AG04449 (cell line): ENCODE measurements at regions of chr1 and their contacts with region 1.

Region 1: DNA sequence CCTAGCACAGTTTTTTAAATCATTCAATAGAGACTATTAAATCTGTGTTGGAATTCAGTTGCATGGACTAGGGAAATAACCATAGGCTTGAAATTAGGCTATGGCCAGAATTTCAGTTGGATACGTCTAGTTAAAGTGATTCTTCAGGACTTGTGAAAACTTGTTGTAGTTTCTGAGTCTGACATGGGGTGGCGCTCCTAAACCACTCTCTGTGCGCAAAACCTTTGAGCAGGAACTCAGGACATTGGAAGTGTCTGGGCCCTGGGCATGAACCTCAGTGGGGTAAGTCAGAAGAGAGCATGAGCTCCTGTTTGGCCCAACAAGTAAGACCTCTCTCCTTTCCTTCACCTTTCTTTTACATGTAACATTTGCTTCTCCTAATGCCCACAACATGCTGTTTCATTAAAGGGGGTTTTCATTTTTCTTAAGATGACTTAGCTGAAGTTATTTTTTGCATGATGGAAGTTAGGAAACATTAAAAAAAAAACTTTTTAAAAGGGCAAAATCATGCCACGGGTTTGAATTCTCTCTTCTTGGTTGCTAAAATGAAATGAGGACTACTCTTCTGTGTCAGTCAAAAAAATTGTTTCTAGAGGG is 17.1 kb upstream of the CCDC190 start:
- DNase-seq: no peak
- H3K4me3 ChIP-seq: no peak overlapping the region
- CTCF ChIP-seq: peak; percentile 70

Region 2: DNA sequence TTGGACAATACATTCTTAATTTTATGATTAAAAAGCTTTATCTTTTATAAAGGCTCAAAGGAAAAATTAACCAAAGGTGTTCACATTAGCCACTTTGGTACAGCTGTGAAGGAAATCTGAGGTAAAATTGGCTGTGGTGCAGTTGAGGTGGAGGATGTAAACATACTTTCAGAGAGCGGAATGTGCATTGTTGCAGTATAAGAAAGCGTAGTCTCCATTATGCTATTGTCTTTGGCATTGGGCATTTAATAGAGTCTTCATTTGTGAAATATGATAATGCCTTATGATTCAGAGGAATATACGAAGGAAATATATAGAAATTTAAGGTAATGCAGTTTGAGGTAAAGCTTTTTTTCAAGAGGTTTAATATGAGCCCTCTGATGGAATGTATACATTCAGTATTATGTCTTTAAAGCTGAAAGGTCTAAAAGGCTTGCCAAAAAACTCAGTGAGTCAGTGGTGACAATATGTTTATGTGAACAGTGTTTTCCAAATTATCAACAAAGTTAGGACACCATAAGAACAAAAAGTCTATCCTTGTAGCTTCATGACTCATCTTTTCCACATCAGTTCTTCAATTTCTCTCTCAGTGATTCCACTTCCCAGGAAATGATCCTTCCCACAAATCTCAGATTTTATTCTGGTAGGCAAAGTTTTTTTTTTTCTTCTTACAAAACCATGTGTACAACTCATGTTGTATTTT is 272.7 kb before region 1 on chr1:
- CTCF ChIA-PET with region 1: no interaction called
- POLR2A ChIA-PET with region 1: no interaction called
- DNase-seq: peak; percentile 73
- H3K4me3 ChIP-seq: no peak overlapping the region
- CTCF ChIP-seq: no peak

Region 3: DNA sequence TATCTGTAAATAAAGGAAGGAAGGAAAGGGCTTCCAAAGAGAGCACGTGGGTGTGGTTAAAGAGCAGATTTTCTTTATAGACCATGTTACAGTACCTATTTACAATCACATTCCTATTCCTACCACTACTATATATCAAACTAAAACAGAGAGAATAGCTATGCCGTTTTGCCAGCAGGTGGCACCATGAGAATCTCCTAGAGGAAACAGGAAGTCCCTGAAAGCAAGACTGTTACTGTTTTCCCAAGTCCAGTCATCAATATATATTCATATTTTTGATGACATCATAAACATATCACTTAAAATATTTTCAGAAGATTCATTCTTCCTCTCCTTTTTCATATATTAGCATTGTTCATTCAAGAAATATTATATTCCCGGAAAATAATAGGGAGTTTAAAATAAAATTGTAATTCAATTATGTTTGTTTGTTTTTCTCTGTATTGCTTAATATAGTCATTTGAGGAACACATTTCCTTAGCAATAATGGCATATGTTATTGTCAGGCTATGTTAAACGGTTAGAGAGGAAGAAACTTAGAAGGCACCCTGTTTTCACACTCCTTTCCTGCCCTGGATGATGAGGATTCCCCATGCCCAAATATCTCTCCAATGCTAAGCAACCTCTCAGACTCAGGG is 23.7 kb before region 1 on chr1:
- CTCF ChIA-PET with region 1: interaction called, 47 read pairs
- POLR2A ChIA-PET with region 1: interaction called, 6 read pairs
- DNase-seq: no peak
- H3K4me3 ChIP-seq: no peak overlapping the region
- CTCF ChIP-seq: peak; percentile 63

Region 4: DNA sequence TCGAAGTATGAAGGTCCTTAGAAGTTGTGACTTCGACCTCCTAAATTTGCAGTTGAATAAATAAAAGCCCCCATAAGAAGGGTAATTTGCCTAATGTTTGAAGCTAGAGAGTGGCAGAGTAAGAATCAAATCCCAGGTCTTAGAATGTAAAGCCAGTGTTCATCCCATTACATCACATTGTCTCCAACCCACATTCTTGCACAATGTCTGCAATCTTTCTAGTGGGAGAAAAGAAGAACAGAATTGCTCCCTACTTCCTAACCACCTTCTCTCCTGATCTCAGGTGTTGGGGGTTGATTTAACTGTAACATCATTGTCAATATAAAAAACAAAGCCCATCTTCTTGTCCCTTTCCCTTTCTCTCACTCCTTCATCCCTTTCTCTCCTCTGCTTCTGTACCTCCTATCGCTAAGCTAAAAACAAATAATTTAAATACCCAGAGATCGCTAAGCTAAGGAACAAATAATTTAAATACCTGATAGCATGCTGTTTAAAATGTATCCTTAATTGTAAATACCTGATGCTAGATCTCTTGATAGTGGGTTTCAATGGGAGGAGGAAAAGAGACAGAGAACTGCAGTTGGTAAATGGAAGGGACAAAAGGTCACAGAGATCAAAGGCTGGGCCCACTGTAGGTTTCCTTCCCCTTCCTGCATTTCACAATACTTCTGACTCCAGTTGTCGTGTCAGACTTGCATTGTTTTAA is 15.0 kb after region 1 on chr1:
- CTCF ChIA-PET with region 1: interaction called, 25 read pairs
- POLR2A ChIA-PET with region 1: no interaction called
- DNase-seq: no peak
- H3K4me3 ChIP-seq: no peak overlapping the region
- CTCF ChIP-seq: no peak

Region 5: DNA sequence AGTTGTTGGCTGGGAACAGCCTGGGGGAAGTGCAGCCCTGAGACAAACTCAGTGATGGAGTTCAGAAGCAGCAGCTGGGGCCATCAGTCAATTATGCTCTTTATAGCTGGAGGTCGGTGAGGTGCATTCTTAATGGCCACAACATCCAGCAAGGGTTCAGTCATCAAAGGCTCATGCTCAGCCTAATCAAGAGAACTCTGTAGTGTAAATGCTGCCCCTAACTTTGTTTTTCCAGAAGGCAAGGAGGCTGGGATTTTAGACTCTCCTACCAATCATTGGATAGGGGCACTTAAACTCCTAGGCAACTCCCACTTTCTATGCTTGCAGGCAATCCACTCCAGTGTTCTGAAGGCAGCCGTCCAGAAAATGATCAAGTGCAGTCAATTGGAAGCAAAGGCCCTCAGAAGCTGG is 176.1 kb after region 1 on chr1:
- CTCF ChIA-PET with region 1: interaction called, 11 read pairs
- POLR2A ChIA-PET with region 1: no interaction called
- DNase-seq: no peak
- H3K4me3 ChIP-seq: no peak overlapping the region
- CTCF ChIP-seq: no peak

Region 6: DNA sequence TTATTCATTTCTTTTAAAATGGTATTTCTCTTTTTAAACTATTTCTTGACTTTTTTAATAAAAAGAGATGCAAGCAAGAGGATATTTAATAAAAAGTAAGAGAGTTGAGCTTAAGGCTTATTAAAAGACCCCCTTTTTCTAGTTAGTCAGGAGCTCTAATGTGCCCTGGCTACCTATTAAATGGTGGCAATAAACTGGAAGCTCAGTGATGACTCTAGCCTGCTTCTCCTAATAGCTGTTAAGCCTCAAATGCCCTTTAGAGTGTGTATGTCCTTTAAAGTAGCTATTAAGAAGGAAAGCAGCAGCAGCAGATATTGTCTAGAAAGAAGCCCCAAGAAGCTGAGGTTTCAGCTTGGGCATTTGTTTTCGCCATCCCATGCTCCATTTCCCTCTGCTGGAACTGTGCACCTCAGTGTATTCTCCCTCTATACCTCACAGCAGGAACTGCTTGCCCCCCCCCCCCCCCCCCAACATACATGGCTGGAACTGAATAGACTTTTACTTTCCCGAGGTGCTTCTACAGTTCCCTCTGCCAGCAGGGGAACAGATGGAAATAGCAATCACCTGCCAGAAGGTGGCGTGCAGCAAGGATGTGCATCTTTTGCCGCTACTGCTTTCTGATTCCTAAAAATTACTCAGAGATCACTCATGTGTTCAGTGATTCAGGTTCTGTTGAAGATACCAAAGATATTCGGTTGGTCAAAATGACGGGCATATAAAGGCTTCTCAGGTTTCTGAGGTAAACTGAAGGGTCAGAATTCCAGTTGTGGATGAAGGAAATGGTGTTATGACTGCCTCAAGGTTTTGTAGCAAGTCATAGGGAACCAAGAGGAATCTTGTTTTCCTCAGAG is 193.5 kb after region 1 on chr1:
- CTCF ChIA-PET with region 1: interaction called, 154 read pairs
- POLR2A ChIA-PET with region 1: interaction called, 12 read pairs
- DNase-seq: no peak
- H3K4me3 ChIP-seq: peak overlapping the region; percentile 62
- CTCF ChIP-seq: peak; percentile 88

Region 7: DNA sequence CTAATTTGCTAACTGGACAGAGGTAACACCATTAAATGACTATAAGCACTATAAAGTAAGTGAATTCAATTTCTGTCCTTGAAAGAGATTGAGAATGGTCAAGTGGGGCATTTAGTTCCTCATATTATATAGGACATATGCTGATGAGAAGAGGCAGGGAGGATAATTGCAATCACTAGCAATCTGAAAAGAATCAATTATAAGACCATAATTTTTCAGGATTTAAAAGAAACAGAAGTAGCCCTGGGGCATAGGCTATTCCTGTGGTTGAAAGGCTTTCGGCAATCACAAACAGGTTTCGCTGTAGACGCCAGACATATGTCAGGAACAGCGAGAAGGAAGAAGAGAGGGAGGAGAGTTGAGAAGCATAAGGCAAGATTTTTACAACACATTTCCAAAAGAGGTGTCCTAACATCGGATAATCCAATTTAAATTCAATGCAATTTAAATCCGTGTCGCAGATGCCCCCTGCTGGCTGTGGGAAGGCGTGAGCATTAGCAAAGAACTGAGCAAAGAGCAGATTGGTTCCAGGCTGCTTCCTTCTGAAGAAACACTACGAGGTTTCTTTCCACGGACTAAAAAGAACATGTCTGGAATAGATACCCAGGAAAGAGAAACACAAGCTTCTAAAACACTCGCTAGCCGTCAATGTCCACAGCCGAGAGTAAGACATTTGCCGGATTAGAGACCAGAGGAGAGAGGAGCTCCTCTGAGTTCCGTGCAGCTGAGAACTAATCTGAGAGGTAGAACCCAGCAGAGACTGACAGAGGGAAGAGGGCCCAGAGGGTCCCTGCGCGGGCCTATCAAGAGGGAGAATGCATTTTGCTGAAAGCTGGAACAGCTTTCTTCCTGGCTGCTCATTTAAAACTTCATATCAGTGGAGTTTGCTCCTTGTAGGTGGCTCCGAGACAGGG is 296.7 kb after region 1 on chr1:
- CTCF ChIA-PET with region 1: interaction called, 58 read pairs
- POLR2A ChIA-PET with region 1: no interaction called
- DNase-seq: no peak
- H3K4me3 ChIP-seq: no peak overlapping the region
- CTCF ChIP-seq: peak; percentile 76

Region 8: DNA sequence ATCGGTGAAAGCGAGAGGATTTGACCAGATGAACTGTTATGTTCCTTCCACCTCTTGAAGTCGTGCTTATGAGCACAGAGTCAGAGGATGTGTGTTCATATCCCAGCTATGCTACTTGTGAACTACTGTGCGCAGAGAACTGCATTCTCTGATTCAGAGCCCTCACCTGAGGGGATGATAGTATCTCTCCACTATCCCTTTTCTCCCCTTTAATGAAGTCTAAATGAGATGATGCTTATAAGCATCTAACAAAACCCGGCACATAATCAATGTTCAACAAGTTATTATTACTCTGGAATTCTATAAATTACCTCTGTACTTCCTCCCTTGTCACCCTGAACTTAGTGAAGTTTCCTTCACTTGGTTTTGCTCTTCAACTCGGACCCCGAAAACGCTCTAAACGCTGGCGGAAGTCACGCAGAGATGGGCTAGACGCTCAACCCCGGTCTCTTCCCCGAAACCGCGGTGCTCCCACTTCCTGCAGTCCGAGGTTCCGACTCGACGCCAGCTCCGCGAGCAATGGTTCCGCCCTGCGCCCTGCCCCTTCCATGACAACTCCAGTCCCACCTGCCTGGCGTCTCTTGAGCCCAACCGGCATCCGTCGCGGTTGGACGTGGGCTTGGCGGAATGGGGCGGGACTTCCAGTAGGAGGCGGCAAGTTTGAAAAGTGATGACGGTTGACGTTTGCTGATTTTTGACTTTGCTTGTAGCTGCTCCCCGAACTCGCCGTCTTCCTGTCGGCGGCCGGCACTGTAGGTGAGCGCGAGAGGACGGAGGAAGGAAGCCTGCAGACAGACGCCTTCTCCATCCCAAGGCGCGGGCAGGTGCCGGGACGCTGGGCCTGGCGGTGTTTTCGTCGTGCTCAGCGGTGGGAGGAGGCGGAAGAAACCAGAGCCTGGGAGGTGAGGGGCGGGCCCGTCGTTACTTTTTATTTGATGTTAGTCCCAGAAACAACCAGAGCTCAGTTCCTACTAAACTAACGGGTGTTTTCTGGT is 443.5 kb after region 1 on chr1 and contains the start of gene NUF2:
- CTCF ChIA-PET with region 1: interaction called, 45 read pairs
- POLR2A ChIA-PET with region 1: no interaction called
- DNase-seq: peak; percentile 96
- H3K4me3 ChIP-seq: peak within 1 kb of the TSS; percentile 87
- CTCF ChIP-seq: no peak